ENCODE measurements at regions of chr20 and their contacts with region 1.

Region 1: DNA sequence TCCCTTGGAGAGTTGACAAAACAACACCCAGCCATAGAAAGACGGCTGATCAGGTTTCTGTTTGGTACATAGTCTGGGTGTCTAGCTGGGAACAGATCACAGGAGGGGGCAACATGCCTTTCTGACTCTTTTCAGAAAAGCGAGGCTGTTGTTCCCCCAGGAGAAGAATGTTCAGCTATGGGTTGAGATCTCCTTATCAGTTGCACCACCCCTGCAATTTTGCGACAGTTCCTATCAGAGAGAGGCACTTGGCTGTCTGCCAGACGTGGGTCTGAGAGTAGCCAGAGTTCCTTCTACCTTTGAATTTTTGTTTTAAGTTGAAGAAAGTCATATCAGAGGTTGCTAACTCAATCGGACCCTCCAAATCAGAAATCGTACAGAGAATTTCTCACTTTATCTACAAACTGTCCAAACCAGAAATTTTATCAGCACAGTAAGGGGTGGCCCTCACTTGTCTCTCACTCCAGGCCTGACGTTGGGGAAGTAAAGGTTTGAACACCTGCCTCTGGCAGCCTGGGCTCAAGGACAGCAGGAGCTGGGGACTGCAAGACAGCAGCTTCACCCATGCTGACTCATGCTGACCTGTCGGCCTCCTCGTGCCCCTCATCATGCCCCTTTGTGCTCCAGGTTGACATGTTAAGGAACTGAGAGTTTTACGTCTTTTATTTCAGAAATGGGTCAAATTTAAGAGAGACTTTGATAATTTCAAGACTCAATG is 42.3 kb downstream of the TMC2 start:
- DNase-seq: no peak
- ATAC-seq: no peak
- H3K4me3 ChIP-seq: no peak overlapping the region
- H3K4me3 Mint-ChIP-seq: no peak overlapping the region
- H3K27ac ChIP-seq: no peak overlapping the region
- H3K27ac Mint-ChIP-seq: no peak overlapping the region
- H3K4me1 ChIP-seq: no peaks in the 10 kb centered on the region
- H3K4me1 Mint-ChIP-seq: no peaks in the 10 kb centered on the region
- H3K27me3 ChIP-seq: peaks cover 4 to 13% of the 10 kb centered on the region in 2 experiments
- H3K27me3 Mint-ChIP-seq: peaks cover 43% of the 10 kb centered on the region
- CTCF ChIP-seq: no peak

Region 2: GRCh38 chr20:2059411-2059810 is 519.2 kb before region 1 on chr20:
- CTCF ChIA-PET with region 1: no interaction called
- POLR2A ChIA-PET with region 1: no interaction called
- intact Hi-C with region 1: loop called in 1 of 2 experiments (anchors 5 kb)
- DNase-seq: no peak
- ATAC-seq: no peak
- H3K4me3 ChIP-seq: no peak overlapping the region
- H3K4me3 Mint-ChIP-seq: no peak overlapping the region
- H3K27ac ChIP-seq: no peak overlapping the region
- H3K27ac Mint-ChIP-seq: no peak overlapping the region
- H3K4me1 ChIP-seq: no peaks in the 10 kb centered on the region
- H3K4me1 Mint-ChIP-seq: no peaks in the 10 kb centered on the region
- H3K27me3 ChIP-seq: peaks cover 0 to 4% of the 10 kb centered on the region in 2 experiments
- H3K27me3 Mint-ChIP-seq: peaks cover 33% of the 10 kb centered on the region
- CTCF ChIP-seq: no peak

Region 3: DNA sequence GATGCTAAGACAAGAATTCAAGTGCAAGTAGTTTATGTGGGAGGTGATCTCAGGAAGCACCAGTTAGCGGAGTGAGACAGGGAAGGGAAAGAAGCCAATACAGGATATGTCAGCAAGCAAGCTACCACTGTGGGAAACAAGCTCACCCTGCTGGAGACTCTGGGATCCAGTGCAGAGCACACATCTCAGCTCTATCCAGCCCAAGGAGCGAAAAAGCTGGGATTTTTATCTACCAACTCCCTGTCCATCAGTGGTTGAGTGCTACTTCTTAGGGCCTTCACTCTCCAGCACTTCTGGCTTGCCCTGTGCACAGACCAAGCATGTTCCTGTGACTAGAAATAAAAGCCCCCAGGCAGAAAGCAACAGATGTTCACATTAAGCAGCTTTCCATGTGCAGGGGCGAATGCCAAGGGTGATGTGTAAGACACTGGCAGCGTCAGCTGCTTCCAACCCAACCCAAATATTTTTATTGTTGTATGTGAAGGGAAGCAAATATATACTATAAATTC is 1447.5 kb after region 1 on chr20:
- CTCF ChIA-PET with region 1: no interaction called
- POLR2A ChIA-PET with region 1: no interaction called
- intact Hi-C with region 1: no loop called
- DNase-seq: peak in 1 of 9 experiments; percentile 32
- ATAC-seq: no peak
- H3K4me3 ChIP-seq: no peak overlapping the region
- H3K4me3 Mint-ChIP-seq: no peak overlapping the region
- H3K27ac ChIP-seq: no peak overlapping the region
- H3K27ac Mint-ChIP-seq: no peak overlapping the region
- H3K4me1 ChIP-seq: no peaks in the 10 kb centered on the region
- H3K4me1 Mint-ChIP-seq: no peaks in the 10 kb centered on the region
- H3K27me3 ChIP-seq: no peaks in the 10 kb centered on the region
- H3K27me3 Mint-ChIP-seq: peaks cover 9% of the 10 kb centered on the region
- CTCF ChIP-seq: no peak